Caco-2 (cell line): ENCODE measurements at regions of chr2 and their contacts with region 1.

Region 1: GRCh38 chr2:120465989-120466703 is 120.2 kb downstream of the INHBB start:
- DNase-seq: peak; percentile 95 to 97
- H3K4me3 ChIP-seq: peak overlapping the region; percentile 10
- H3K4me3 Mint-ChIP-seq: peak overlapping the region; percentile 72
- H3K27ac Mint-ChIP-seq: peak overlapping the region; percentile 84
- H3K4me1 ChIP-seq: peaks cover 46% of the 10 kb centered on the region
- H3K4me1 Mint-ChIP-seq: peaks cover 22% of the 10 kb centered on the region
- H3K27me3 ChIP-seq: no peaks in the 10 kb centered on the region
- H3K27me3 Mint-ChIP-seq: no peaks in the 10 kb centered on the region
- CTCF ChIP-seq: no peak

Region 2: GRCh38 chr2:120223034-120223912 is 242.9 kb before region 1 on chr2 and contains the start of gene TMEM185B:
- CTCF ChIA-PET with region 1: no interaction called
- POLR2A ChIA-PET with region 1: no interaction called
- intact Hi-C with region 1: loop called (anchors 10 kb)
- DNase-seq: peak; percentile 96 to 98
- H3K4me3 ChIP-seq: peak within 1 kb of the TSS; percentile 76
- H3K4me3 Mint-ChIP-seq: peak within 1 kb of the TSS; percentile 97
- H3K27ac Mint-ChIP-seq: peak within 1 kb of the TSS; percentile 96
- H3K4me1 ChIP-seq: peaks cover 23% of the 10 kb centered on the region
- H3K4me1 Mint-ChIP-seq: peaks cover 17% of the 10 kb centered on the region
- H3K27me3 ChIP-seq: no peaks in the 10 kb centered on the region
- H3K27me3 Mint-ChIP-seq: no peaks in the 10 kb centered on the region
- CTCF ChIP-seq: peak; percentile 54 to 77
- total RNA-seq, gene TMEM185B: 67.3 and 69.9 TPM in 2 replicates

Region 3: DNA sequence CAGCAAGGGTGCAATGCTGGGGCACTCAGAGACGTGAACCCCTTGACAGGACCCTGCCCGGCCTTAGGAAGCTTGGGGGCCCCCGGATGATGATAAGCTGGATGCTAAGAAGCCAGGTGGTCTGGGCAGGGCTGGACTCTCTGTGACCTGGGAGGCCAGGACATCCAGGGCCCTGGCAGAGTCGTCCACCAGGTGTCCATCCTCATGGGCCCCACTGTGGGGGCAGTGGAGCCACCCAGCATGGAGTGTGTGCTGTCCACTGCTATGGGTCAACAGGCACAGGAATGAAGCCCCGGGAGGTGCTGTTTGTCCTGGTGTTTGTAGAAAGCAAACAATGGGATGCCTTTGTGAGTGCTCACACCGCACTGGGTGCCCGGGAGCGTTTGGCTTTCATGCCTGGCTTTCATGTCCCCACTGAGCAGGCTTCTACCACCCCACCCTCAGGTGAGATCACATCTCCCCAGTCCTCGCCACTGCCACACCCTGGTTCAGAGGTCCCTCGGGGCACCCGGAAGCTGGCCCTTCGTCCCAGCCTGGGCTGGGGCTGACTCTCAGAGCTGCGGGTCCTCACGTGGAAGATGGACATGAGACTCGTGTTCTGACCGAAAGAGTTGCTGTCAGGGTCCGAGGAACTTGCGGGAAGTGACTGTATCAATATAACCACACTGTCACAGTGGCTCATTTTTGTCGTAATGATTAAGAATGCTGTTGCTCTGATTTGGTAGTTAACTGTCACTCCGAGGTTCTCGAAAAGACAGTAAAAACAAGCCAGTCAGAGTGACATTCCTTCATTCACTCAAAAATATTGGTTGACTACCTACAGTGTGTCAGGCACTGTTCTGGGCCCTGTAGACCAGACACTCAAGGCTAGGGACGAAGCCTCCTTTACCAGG is 66.9 kb before region 1 on chr2:
- CTCF ChIA-PET with region 1: interaction called, 4 read pairs
- POLR2A ChIA-PET with region 1: interaction called, 9 read pairs
- intact Hi-C with region 1: loop called (anchors 1 kb)
- DNase-seq: peak; percentile 96 to 98
- H3K4me3 ChIP-seq: no peak overlapping the region
- H3K4me3 Mint-ChIP-seq: peak overlapping the region; percentile 4
- H3K27ac Mint-ChIP-seq: peak overlapping the region; percentile 96
- H3K4me1 ChIP-seq: peaks cover 88% of the 10 kb centered on the region
- H3K4me1 Mint-ChIP-seq: peaks cover 58% of the 10 kb centered on the region
- H3K27me3 ChIP-seq: no peaks in the 10 kb centered on the region
- H3K27me3 Mint-ChIP-seq: no peaks in the 10 kb centered on the region
- CTCF ChIP-seq: peak in 1 of 2 experiments; percentile 31

Region 4: DNA sequence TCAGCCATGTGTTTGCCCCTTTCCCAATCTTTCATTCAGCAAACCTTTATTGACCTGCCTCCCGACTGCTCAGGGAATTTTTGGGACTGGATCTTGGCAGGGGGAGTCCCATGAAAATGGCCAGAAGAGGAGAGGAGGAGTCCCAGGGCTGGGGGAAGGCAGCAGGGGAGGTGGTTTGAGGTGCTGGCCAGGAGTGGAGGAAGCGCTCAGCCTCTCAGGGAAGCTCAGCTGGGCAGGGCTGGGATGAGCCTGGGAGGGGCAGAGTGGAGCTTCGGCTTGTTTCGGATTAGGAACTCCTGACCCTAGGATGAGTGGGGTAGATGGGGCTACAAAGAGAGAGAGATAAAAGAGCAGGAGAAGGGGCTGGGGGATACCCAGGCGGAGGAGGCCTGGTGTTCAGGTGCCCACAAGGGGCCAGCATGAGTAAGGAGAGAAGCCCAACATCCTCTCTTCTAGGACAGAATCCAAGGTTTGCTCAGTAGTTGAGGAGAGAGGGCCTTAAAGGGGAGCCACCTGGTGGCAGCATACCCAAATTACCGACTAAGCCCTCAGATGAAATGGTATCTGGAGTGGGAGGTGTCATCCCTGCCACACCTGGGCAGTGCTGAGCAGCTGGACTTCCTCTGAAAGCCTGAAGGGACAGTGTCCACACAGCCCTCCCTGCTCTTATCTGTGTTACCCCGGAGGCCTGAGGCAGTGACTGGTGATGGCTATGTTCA is 29.1 kb before region 1 on chr2:
- CTCF ChIA-PET with region 1: interaction called, 6 read pairs
- POLR2A ChIA-PET with region 1: no interaction called
- intact Hi-C with region 1: loop called (anchors 1 kb)
- DNase-seq: peak; percentile 88 to 89
- H3K4me3 ChIP-seq: no peak overlapping the region
- H3K4me3 Mint-ChIP-seq: no peak overlapping the region
- H3K27ac Mint-ChIP-seq: peak overlapping the region; percentile 33
- H3K4me1 ChIP-seq: peaks cover 16% of the 10 kb centered on the region
- H3K4me1 Mint-ChIP-seq: peaks cover 33% of the 10 kb centered on the region
- H3K27me3 ChIP-seq: no peaks in the 10 kb centered on the region
- H3K27me3 Mint-ChIP-seq: no peaks in the 10 kb centered on the region
- CTCF ChIP-seq: peak; percentile 82 to 89

Region 5: DNA sequence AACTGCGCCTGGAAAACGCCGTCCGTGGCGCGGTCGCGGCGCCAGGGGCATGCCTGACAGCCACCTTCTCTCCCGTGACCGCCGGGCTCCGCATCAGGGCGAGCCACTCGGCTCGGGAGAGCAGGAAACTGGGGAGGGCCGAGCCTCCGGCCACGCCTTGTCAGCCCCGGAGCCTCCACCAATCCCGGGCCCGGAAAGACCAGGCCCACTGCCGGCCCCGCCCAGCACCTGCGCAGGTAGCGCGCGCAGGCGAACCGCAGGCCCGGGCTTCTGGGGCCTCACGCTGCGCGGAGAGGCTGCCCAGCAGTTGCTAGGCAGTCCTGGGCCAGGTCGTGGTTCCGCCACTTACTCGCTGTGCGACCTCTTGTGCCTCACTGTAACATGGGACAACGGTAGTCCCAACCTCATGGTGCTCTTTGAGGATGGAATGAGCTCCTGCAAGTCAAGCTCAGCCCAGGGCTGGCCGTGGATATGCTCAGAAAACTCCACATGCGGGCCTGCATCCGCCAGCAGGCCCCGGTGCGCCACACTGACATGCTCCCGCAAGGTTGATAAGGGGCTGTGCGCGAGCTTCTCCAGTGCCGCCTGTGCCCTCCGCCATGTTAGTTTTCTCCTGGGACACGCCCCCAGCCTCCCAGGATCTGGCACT is 23.1 kb before region 1 on chr2:
- CTCF ChIA-PET with region 1: interaction called, 6 read pairs
- POLR2A ChIA-PET with region 1: interaction called, 3 read pairs
- intact Hi-C with region 1: loop called (anchors 1 kb)
- DNase-seq: peak; percentile 93 to 96
- H3K4me3 ChIP-seq: peak overlapping the region; percentile 61
- H3K4me3 Mint-ChIP-seq: peak overlapping the region; percentile 79
- H3K27ac Mint-ChIP-seq: peak overlapping the region; percentile 51
- H3K4me1 ChIP-seq: peaks cover 3% of the 10 kb centered on the region; the same call in 1 of the 2 replicates
- H3K4me1 Mint-ChIP-seq: peaks cover 20% of the 10 kb centered on the region
- H3K27me3 ChIP-seq: no peaks in the 10 kb centered on the region
- H3K27me3 Mint-ChIP-seq: no peaks in the 10 kb centered on the region
- CTCF ChIP-seq: no peak

Region 6: DNA sequence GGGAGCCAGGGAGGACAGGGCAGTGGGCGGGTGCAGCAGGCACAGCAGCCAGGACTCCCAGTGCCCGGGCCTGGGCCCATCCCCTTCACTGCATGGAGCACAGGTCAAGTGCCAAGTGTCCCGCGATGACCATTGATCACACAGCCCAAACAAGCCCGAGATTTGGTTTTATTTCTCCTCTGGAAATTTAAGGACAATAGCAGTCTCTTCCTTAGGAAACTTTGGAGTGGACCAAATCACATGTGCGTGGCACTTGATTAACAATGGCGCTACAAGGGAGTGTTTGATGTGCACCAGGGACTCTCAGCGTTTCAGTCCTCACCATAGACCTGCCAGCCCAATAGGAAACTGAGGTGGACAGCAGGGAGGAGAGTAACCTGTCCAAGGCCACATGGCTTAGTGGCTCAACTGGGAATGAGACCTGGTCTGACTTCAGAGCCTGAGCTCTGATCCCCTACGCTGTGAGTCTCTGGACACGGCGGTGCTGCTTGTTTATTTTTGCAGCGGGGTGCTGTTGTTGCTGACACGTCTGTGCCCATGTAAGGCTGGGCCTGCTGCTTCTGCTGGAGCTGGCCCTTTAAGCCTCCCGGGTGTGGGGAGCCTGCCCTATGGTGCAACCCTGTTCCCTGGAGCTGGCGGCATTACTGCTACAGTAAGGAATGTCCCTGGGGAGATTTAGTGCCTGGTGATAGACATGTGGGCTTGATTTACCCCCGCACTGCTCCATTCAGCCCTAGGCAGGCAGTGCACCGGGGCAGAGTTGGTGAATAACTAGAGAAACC is 74.0 kb after region 1 on chr2:
- CTCF ChIA-PET with region 1: interaction called, 5 read pairs
- POLR2A ChIA-PET with region 1: no interaction called
- intact Hi-C with region 1: loop called (anchors 2 kb)
- DNase-seq: peak; percentile 72 to 73
- H3K4me3 ChIP-seq: no peak overlapping the region
- H3K4me3 Mint-ChIP-seq: no peak overlapping the region
- H3K27ac Mint-ChIP-seq: peak overlapping the region; percentile 31
- H3K4me1 ChIP-seq: peaks cover 21% of the 10 kb centered on the region
- H3K4me1 Mint-ChIP-seq: peaks cover 1% of the 10 kb centered on the region
- H3K27me3 ChIP-seq: no peaks in the 10 kb centered on the region
- H3K27me3 Mint-ChIP-seq: no peaks in the 10 kb centered on the region
- CTCF ChIP-seq: no peak

Region 7: DNA sequence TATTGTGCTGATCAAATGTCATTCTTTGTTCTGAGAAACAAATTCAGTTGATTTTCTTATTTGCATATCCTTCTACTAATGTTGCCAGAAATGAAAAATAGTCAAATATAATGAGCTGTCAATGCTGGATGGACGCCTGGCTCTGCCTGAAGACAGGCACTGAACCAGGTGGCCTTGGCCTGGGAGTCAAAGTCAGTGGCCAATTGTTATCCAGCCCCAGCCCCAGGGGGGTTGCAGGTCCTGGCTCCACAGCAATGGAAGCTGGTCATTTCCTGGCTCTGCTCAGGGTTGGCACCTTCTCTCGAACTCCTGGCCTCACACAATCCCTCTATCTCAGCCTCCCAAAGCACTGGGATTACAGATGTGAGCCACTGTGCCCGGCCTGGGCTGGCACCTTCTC is 92.7 kb after region 1 on chr2:
- CTCF ChIA-PET with region 1: no interaction called
- POLR2A ChIA-PET with region 1: no interaction called
- intact Hi-C with region 1: no loop called
- DNase-seq: no peak
- H3K4me3 ChIP-seq: no peak overlapping the region
- H3K4me3 Mint-ChIP-seq: no peak overlapping the region
- H3K27ac Mint-ChIP-seq: no peak overlapping the region
- H3K4me1 ChIP-seq: peaks cover 9% of the 10 kb centered on the region
- H3K4me1 Mint-ChIP-seq: peaks cover 19% of the 10 kb centered on the region
- H3K27me3 ChIP-seq: no peaks in the 10 kb centered on the region
- H3K27me3 Mint-ChIP-seq: no peaks in the 10 kb centered on the region
- CTCF ChIP-seq: no peak

Region 8: GRCh38 chr2:121260370-121261154 is 794.4 kb after region 1 on chr2:
- CTCF ChIA-PET with region 1: no interaction called
- POLR2A ChIA-PET with region 1: no interaction called
- intact Hi-C with region 1: no loop called
- DNase-seq: peak in 1 of 2 experiments; percentile 15
- H3K4me3 ChIP-seq: no peak overlapping the region
- H3K4me3 Mint-ChIP-seq: no peak overlapping the region
- H3K27ac Mint-ChIP-seq: no peak overlapping the region
- H3K4me1 ChIP-seq: no peaks in the 10 kb centered on the region; the same call in 1 of the 2 replicates
- H3K4me1 Mint-ChIP-seq: no peaks in the 10 kb centered on the region
- H3K27me3 ChIP-seq: no peaks in the 10 kb centered on the region
- H3K27me3 Mint-ChIP-seq: no peaks in the 10 kb centered on the region
- CTCF ChIP-seq: no peak